Activated naive CD4-positive, alpha-beta T cell treated with anti-CD3 and anti-CD28 coated beads for 36 hours (primary cell): ENCODE measurements at regions of chr2 and their contacts with region 1.

Region 1: DNA sequence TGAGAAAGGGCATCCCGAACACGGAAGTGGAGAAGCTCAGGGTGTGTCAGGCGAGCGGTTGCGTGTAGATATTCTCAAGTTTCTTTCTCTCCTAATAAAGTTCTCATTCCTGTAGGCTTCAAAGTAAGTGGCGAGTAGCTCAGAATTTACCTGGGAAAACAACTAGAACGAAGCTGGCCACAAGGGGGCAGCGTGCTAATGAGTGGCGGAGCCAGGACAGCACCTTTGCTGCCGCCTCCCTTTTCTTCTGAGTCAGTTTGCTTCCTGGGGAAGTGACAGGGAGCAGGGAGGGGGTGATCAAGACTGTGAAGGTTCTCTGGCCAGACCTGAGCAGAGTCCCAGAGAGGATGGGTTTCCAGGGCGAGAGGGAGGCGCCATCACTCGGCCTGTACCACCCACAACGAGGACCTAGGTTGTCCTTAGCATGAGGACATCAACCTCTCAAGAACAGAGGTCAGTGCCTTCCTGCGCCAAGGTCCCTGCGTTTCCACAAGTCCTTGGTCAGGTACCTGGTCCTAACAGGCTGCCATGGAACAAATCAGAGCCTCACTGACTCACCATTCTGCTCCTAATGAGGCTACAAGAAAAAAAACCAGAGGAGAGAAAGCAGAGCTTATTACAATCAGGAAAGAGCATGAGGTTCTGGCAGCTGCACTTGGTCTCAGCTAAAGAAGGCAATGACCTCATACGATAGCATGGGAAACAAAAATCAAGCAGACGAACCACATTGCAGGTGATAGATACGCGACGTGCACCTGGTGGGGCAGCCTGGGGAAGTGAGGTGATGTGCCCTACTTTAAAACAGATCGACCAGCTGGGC is 98.6 kb downstream of the PLB1 start:
- DNase-seq: peak; percentile 96
- H3K4me3 Mint-ChIP-seq: peak overlapping the region; percentile 54
- H3K27ac Mint-ChIP-seq: peak overlapping the region; percentile 82
- H3K4me1 Mint-ChIP-seq: peaks cover 14% of the 10 kb centered on the region
- H3K27me3 Mint-ChIP-seq: no peaks in the 10 kb centered on the region

Region 2: GRCh38 chr2:28566521-28567041 is 27.9 kb before region 1 on chr2:
- CTCF ChIA-PET with region 1: interaction called, 21 read pairs
- intact Hi-C with region 1: loop called (anchors 1 kb)
- DNase-seq: peak; percentile 93
- H3K4me3 Mint-ChIP-seq: peak overlapping the region; percentile 83
- H3K27ac Mint-ChIP-seq: peak overlapping the region; percentile 71
- H3K4me1 Mint-ChIP-seq: peaks cover 8% of the 10 kb centered on the region
- H3K27me3 Mint-ChIP-seq: no peaks in the 10 kb centered on the region

Region 3: GRCh38 chr2:28615706-28616105 is 21.2 kb after region 1 on chr2:
- CTCF ChIA-PET with region 1: interaction called, 24 read pairs
- intact Hi-C with region 1: loop called (anchors 1 kb)
- DNase-seq: no peak
- H3K4me3 Mint-ChIP-seq: no peak overlapping the region
- H3K27ac Mint-ChIP-seq: no peak overlapping the region
- H3K4me1 Mint-ChIP-seq: peaks cover 48% of the 10 kb centered on the region
- H3K27me3 Mint-ChIP-seq: no peaks in the 10 kb centered on the region

Region 4: GRCh38 chr2:28681158-28681571 is 86.7 kb after region 1 on chr2:
- CTCF ChIA-PET with region 1: interaction called, 7 read pairs
- intact Hi-C with region 1: loop called (anchors 1 kb)
- DNase-seq: peak; percentile 82
- H3K4me3 Mint-ChIP-seq: peak overlapping the region; percentile 33
- H3K27ac Mint-ChIP-seq: peak overlapping the region; percentile 86
- H3K4me1 Mint-ChIP-seq: peaks cover 35% of the 10 kb centered on the region
- H3K27me3 Mint-ChIP-seq: no peaks in the 10 kb centered on the region

Region 5: GRCh38 chr2:28761420-28761819 is 166.9 kb after region 1 on chr2:
- CTCF ChIA-PET with region 1: interaction called, 38 read pairs
- intact Hi-C with region 1: no loop called
- DNase-seq: no peak
- H3K4me3 Mint-ChIP-seq: no peak overlapping the region
- H3K27ac Mint-ChIP-seq: peak overlapping the region; percentile 46
- H3K4me1 Mint-ChIP-seq: peaks cover 85% of the 10 kb centered on the region
- H3K27me3 Mint-ChIP-seq: no peaks in the 10 kb centered on the region

Region 6: DNA sequence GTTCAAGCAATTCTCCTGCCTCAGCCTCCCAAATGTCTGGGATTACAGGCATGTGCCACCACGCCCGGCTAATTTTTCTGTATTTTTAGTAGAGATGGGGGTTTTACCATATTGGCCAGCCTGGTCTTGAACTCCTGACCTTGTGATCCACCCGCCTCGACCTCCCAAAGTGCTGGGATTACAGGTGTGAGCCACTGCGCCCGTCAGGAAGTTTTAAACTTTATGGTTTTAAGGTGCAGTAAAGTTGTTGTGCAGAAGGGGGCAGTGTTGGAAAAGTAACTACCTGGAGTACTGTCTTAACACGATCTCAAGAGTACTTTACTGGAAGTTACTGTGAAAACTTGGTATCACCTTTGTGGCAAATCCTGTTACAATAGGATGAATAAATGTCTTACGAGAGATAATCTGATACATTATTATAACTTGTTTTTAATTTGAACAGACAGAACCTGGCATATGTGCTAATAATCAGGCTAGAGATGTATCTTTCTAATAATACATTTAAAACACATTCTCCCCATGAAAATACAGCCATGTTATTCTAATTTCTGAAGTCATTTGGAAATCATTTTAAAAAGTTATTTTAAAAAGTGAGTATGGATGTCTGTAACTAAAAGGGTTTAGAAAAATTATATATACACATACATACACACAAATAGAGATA is 226.9 kb after region 1 on chr2:
- CTCF ChIA-PET with region 1: interaction called, 11 read pairs
- intact Hi-C with region 1: no loop called
- DNase-seq: peak; percentile 81
- H3K4me3 Mint-ChIP-seq: no peak overlapping the region
- H3K27ac Mint-ChIP-seq: no peak overlapping the region
- H3K4me1 Mint-ChIP-seq: peaks cover 8% of the 10 kb centered on the region
- H3K27me3 Mint-ChIP-seq: no peaks in the 10 kb centered on the region